ENCODE measurements at regions of chr3 and their contacts with region 1.

Region 1: DNA sequence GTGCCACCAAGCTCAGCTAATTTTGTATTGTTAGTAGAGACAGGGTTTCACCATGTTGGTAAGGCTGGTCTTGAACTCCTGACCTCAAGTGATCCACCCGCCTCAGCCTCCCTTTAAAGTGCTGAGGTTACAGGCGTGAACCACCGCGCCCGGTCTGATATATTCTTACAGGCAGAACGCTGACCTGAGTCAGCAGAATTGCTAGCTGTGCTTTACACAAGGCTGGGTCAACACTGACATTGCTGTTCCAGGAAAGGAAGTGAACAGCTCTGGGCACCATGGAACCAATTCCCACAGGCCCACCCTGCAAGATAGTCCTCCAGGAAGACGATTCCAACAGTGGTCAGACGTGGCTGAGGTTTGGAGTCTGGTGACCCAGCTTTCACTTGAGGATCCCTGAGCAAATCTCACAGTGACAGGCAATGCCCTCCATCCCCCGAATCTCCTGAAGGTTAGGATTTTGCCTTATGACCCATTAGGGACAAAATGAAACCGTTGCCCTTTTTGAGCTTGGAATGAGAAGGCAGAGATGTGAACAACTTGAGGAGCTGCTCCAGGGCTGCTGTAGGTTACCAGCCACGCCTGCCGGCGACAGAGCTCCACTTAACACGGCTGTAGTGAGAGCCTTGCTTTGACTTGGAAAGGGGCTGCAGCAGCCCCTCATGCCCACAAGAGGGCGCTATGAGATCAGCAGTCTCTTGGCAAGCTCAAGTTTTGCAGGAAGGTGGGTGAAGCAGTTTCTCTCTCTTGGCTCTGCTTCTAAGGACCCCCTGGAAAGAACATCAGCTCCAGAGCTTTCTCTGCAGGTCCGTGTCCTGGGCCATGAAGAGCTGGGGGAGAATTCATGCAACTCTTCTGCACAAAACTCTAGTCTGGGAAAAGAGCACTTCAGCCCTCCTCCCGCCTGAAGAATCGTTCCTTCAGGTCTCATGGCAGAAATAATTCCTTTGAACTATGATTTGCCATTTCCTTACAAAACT is 74.1 kb downstream of the SENP2 start:
- DNase-seq: peak; percentile 61 to 86
- H3K4me3 ChIP-seq: no peak overlapping the region
- H3K27ac ChIP-seq: no peak overlapping the region
- H3K4me1 ChIP-seq: peaks cover 0 to 3% (median under 1%) of the 10 kb centered on the region in 4 experiments; a peak in 3 of 7 replicates
- H3K27me3 ChIP-seq: no peaks in the 10 kb centered on the region
- CTCF ChIP-seq: peak; percentile 92 to 100 (median 93)
- EP300 ChIP-seq: no peak
- POLR2A ChIP-seq: no peak; a peak in 1 of 3 replicates
- RAD21 ChIP-seq: peak; percentile 96 to 97

Region 2: GRCh38 chr3:185430375-185430774 is 229.9 kb before region 1 on chr3:
- CTCF ChIA-PET with region 1: no interaction called
- POLR2A ChIA-PET with region 1: no interaction called
- DNase-seq: no peak
- H3K4me3 ChIP-seq: no peak overlapping the region
- H3K27ac ChIP-seq: no peak overlapping the region
- H3K4me1 ChIP-seq: no peaks in the 10 kb centered on the region
- H3K27me3 ChIP-seq: no peaks in the 10 kb centered on the region
- CTCF ChIP-seq: no peak
- EP300 ChIP-seq: no peak
- POLR2A ChIP-seq: no peak
- RAD21 ChIP-seq: no peak

Region 3: DNA sequence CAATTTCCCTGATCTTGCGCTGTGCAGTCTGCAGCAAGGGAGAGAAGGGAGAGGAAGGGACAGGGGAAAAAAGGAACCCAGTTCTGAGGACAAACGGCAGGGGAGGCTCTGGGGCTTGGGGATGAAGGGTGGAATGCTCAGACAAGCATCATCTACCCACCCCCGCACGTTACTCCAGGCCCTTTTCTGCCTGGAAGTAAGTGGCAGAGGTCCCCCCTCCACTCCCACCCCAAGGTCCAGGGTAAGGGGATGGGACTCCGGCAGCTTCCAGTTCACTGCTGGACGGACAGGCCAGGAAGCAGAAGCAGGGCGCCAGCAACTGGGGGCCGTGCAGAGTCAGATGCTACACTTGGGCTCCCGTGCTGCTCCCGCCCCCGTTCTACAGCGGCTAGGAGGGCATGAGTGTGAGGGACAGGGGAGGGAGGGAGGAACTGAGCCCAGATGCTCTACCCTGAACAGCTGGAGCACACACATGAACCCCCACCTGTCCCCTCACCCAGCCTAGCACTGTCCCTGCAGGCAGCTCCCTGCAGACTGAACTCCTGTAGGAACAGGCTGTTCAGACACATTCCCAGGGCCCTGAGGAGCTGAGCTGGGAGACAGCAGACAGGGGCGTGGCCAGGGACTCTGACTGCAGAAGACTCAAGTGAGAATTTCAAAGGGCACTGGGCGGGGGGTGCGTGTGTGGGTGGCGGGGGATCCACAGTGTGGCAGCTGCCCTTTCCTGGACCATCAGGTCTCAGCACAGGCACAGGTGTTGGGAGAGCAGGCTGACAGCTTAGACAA is 14.4 kb before region 1 on chr3:
- CTCF ChIA-PET with region 1: interaction called, 67 read pairs
- POLR2A ChIA-PET with region 1: interaction called, 11 read pairs
- DNase-seq: no peak
- H3K4me3 ChIP-seq: no peak overlapping the region
- H3K27ac ChIP-seq: no peak overlapping the region; the same call in 1 of the 2 replicates
- H3K4me1 ChIP-seq: peaks cover 5 to 20% (median 12%) of the 10 kb centered on the region in 4 experiments
- H3K27me3 ChIP-seq: no peaks in the 10 kb centered on the region
- CTCF ChIP-seq: no peak
- EP300 ChIP-seq: no peak
- POLR2A ChIP-seq: no peak
- RAD21 ChIP-seq: no peak

Region 4: GRCh38 chr3:185711255-185711870 is 51.1 kb after region 1 on chr3:
- CTCF ChIA-PET with region 1: interaction called, 14 read pairs
- POLR2A ChIA-PET with region 1: no interaction called
- DNase-seq: peak in 1 of 2 experiments; percentile 50
- H3K4me3 ChIP-seq: no peak overlapping the region
- H3K27ac ChIP-seq: no peak overlapping the region
- H3K4me1 ChIP-seq: peaks cover 8 to 29% (median 22%) of the 10 kb centered on the region in 4 experiments
- H3K27me3 ChIP-seq: no peaks in the 10 kb centered on the region
- CTCF ChIP-seq: no peak
- EP300 ChIP-seq: no peak
- POLR2A ChIP-seq: no peak
- RAD21 ChIP-seq: no peak; a peak in 1 of 4 replicates

Region 5: DNA sequence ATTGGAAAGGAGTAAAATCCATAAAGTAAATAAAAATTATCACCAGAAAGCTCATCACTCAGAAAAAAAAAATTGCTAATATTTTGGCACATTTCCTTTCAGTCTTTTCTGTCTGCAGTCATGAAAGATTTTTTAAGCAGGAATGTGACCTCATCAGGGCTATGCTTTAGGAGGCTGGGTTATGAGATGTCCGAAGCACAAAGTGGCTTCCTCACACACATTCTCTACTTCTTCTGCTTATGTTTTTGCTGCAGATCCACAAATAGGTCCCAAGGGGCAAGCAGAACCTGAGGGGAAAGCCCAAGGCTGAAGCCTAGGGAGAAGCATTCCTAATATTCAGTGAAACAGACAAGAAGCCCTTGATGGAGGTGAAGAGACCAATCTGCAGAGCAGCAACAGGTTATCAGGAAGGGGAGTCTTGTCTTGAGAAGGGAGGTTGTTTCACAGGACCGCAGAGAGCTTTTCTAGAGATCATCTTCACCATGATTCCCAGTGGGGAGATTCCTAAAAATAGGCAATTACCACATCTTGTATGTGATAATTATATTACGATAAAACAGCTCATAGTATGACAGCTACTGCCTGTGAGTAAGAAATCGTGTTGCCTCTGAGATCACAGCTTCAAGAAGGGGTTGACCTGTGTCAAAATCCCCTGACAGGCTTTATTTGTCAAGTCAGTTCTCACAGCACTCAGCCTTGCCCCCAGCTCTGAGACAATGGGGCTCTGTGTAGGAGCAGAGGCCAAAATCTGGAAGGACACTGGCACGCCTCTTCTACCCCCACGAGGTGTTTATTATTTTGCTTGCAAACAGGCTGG is 104.1 kb after region 1 on chr3:
- CTCF ChIA-PET with region 1: interaction called, 19 read pairs
- POLR2A ChIA-PET with region 1: interaction called, 3 read pairs
- DNase-seq: no peak
- H3K4me3 ChIP-seq: no peak overlapping the region
- H3K27ac ChIP-seq: no peak overlapping the region
- H3K4me1 ChIP-seq: peaks cover 0 to 18% (median 8%) of the 10 kb centered on the region in 4 experiments; a peak in 6 of 7 replicates
- H3K27me3 ChIP-seq: no peaks in the 10 kb centered on the region
- CTCF ChIP-seq: no peak
- EP300 ChIP-seq: no peak
- POLR2A ChIP-seq: no peak
- RAD21 ChIP-seq: no peak

Region 6: DNA sequence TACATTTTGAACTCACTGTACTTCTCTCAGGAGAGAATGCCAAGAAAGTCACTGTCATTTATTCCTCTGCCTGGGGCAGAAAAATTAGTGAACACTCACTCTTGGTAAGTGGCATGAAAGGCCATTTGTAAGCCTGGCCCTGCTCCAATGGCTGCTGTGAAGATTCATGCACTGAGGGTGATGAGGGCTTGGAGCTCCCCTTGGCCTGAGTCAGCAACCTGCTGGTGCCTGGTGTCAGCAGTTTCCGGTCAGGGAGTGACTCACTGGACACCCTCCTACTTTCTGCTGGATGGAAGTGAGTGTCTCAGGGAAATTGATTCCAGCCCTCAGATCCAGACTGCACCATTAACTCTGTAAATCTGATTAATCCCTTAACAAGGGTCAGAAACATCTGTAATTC is 240.0 kb after region 1 on chr3:
- CTCF ChIA-PET with region 1: interaction called, 28 read pairs
- POLR2A ChIA-PET with region 1: no interaction called
- DNase-seq: no peak
- H3K4me3 ChIP-seq: no peak overlapping the region
- H3K27ac ChIP-seq: no peak overlapping the region
- H3K4me1 ChIP-seq: no peaks in the 10 kb centered on the region
- H3K27me3 ChIP-seq: no peaks in the 10 kb centered on the region
- CTCF ChIP-seq: no peak
- EP300 ChIP-seq: no peak
- POLR2A ChIP-seq: no peak
- RAD21 ChIP-seq: no peak